Heart left ventricle (tissue), 16 donors: ENCODE measurements at regions of chr6 and their contacts with region 1.

Region 1: GRCh38 chr6:41895300-41896233 is at the start of gene USP49:
- DNase-seq: peak; percentile 88 to 92 (median 91)
- ATAC-seq: peak; percentile 92 to 99 (median 98)
- H3K4me3 ChIP-seq: peak within 1 kb of the TSS; percentile 59 to 94 (median 79)
- H3K27ac ChIP-seq: peak within 1 kb of the TSS in 11 of 12 donors; percentile 60 to 92 (median 74)
- H3K4me1 ChIP-seq: peaks cover 0 to 31% (median 12%) of the 10 kb centered on the region in 12 donors
- H3K27me3 ChIP-seq: no peaks in the 10 kb centered on the region
- CTCF ChIP-seq: no peak
- POLR2A ChIP-seq: no peak
- total RNA-seq, gene USP49: 1.2 to 3.4 (median 2.4) TPM

Region 2: GRCh38 chr6:41941280-41942066 is 45.9 kb after region 1 on chr6 and contains the start of gene CCND3:
- intact Hi-C with region 1: loop called in 1 of 10 experiments (anchors 1 kb)
- DNase-seq: peak; percentile 94 to 97 (median 95)
- ATAC-seq: peak; percentile 84 to 95 (median 94)
- H3K4me3 ChIP-seq: peak within 1 kb of the TSS; percentile 63 to 99 (median 88)
- H3K27ac ChIP-seq: peak within 1 kb of the TSS; percentile 54 to 95 (median 86)
- H3K4me1 ChIP-seq: peaks cover 7 to 63% (median 46%) of the 10 kb centered on the region in 12 donors
- H3K27me3 ChIP-seq: no peaks in the 10 kb centered on the region
- CTCF ChIP-seq: peak in 2 of 12 donors; percentile 2 to 11
- POLR2A ChIP-seq: peak in 1 of 2 donors; percentile 70
- total RNA-seq, gene CCND3: 33.9 to 116 (median 46.2) TPM